Posterior vena cava (tissue), 2 donors: ENCODE measurements at regions of chr14 and their contacts with region 1.

Region 1: DNA sequence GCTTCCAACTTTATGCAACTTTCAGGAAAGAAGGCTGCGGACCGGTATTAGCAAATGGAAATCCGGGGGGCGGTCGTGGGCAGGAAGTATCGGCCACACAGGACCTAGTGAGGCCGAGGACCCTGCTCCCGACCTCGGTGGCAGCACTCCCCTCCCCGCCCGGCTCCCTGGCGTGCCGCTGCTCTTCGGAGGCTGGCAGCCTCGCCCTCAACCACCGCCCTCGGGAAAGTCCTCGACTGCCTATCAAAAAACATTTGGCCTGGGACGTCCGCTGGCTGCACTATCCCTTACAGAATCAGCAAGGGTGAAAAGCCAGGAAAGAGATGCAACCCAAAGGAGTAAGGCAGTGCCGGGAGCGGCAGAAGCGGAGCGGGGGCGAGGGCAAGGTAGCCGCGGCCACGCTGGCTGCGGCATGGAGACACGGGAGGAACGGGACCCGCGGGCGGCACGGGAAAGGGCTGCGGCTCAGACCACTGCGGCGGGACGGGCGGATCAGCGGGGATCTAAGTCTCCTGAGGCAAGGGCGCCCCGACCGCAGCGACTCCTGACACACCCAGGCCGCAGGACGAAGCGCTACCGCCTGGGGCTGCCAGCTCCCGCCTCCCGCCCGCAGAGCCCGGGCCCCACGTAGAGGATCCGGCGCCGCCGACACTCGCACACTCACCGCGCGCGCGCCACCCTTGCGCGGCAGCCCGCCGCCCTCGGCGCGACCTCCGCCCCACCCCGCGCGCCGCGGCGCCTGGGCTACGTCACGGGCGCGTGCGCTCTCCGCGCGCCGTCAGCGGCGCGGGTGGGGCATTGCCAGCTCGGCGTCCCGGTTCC is at the starts of genes BBOF1 and ENTPD5:
- DNase-seq: peak; percentile 95
- total RNA-seq, gene BBOF1: 6.8 to 7.2 TPM
- total RNA-seq, gene ENTPD5: 10.6 to 12.2 TPM

Region 2: DNA sequence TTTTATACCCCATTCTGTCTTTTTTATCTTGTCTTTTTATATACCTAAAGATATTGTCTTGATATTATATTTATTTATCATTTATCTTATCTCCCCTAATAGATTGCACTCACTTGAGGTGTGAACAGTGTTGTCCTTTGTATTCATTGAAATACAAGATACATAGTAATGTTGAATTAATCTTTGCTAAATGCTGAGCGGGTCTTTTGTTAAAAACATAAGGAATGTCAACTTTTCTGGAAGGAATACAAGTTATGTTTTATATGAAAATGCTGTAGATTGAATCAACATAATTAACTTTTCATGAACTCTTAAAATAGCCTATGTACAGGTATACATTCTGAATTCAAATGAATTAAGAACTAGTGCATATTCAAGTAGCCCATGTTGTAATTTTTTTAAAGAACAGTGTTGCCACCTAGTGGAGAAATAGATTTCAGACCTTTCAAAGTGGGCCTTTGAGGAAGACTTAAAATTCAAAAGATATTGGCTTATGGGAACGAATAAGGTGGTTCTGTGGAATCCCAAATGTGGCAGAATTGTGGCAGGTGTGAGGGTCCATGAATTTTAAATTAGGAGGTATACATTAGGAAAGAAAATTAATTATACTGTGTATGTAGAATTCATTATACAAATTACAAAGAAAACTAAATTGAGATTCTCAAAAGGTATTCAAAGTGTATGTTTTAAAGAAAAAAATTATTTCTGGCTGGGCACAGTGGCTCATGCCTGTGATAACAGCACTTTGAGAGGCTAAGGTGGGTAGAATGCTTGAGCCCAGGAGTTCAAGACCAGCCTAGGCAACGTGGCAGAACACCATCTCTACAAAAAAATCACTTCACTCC is 19.4 kb after region 1 on chr14:
- intact Hi-C with region 1: loop called in 1 of 2 experiments (anchors 1 kb)
- DNase-seq: no peak

Region 3: DNA sequence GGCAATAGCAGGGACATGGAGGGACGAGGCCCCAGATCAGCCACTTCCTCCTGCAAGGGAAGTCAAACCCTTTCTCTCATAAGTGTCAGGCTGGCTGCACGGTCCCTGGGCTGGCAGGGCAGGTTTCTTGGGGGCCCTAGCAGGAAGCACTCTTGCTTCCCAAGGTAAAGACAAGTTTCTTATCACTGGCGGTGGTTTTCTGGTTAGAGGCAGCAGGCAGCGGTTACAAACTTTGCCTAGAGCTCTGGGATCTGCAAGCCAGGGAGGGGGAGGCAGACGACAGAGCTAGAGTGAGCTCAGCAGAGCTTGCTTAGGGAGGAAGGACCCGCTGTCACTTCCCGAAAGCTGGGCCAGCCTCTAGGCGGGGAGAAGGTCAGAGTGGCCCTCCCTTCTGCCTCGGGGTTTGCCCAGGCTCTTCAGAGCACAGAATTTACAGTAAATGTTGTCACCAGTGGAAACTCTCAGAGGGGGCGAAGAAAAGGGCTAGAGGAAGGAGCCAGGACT is 1523.8 kb after region 1 on chr14:
- intact Hi-C with region 1: no loop called
- DNase-seq: peak; percentile 96